Mammary epithelial cell (primary cell): ENCODE measurements at regions of chr13 and their contacts with region 1.

Region 1: DNA sequence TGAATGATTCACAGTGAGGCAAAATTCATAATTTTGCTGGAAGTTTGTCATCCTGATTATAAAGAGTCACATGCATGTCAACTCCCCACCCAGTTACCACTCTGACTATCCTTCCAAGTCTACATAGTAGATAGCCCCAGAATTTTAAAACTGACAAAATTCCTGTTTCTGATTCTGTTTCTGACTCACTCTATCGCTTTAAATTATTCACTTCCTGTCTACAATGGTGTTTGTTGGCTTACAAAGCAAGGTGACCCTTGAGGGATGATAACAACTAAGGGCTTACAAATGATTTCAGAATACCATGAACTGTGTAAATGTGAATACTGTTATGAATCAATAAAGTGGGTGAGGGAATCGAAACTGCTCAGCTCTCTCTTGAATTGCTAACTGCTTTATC is 98.7 kb upstream of the KL start:
- DNase-seq: no peak
- H3K4me3 ChIP-seq: no peak overlapping the region
- H3K27ac ChIP-seq: no peak overlapping the region
- H3K4me1 ChIP-seq: no peaks in the 10 kb centered on the region
- H3K27me3 ChIP-seq: no peaks in the 10 kb centered on the region
- CTCF ChIP-seq: no peak

Region 2: GRCh38 chr13:32881074-32881780 is 36.3 kb before region 1 on chr13:
- CTCF ChIA-PET with region 1: no interaction called
- dilution Hi-C with region 1: loop called (anchors 5 kb)
- in situ Hi-C with region 1: no loop called
- intact Hi-C with region 1: no loop called
- DNase-seq: peak; percentile 35
- H3K4me3 ChIP-seq: no peak overlapping the region
- H3K27ac ChIP-seq: no peak overlapping the region
- H3K4me1 ChIP-seq: peaks cover 13% of the 10 kb centered on the region
- H3K27me3 ChIP-seq: peaks cover 7% of the 10 kb centered on the region
- CTCF ChIP-seq: no peak

Region 3: DNA sequence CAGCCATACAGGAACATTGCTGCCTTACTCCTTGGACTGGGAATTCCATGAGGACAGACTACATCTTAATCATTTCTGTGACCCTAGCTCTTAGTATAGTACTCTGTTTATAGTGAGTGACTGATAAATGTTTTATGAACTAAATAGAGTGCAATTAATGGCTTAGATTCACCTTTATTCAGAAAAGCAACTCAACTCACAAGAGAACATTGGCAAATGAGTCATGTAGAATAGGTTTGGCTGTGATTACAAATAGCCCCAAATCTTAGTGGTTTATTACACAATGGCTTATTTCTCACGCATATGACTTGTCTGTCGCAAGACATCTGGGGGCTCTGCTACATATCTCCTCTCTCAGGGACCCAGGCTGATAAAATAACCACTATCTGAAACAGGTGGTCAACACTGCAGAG is 22.9 kb before region 1 on chr13:
- CTCF ChIA-PET with region 1: no interaction called
- dilution Hi-C with region 1: no loop called
- in situ Hi-C with region 1: no loop called
- intact Hi-C with region 1: no loop called
- DNase-seq: peak; percentile 74
- H3K4me3 ChIP-seq: no peak overlapping the region
- H3K27ac ChIP-seq: no peak overlapping the region
- H3K4me1 ChIP-seq: peaks cover 23% of the 10 kb centered on the region
- H3K27me3 ChIP-seq: peaks cover 10% of the 10 kb centered on the region
- CTCF ChIP-seq: no peak